ENCODE measurements at regions of chr21 and their contacts with region 1.

Region 1: DNA sequence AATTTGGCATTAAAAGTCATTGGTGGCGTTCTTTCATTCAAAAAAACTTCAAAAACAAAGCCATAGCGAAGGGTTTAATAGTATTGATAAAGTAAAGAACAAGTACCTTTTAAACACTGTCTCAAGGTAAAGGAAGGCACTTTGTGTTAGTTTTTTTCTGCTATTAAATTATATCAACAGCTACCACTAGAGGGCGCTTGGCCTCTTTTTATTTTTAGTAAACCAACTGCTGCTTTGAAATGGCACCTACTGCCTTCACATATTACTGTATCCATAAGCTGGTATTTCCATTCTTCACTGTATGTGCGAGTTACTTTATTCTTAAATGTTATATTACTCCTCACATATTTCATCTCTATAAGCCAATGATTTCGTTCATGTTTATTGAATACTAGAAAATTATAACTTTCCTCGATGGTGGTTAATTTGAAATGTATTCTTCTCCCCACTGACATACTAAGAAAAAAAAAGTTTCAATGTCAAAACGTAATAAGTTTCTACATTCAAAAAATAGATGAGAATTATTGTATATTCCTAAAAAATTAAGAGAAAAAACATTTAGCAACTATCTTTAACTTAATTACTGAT is 125.7 kb upstream of the CXADR start:
- H3K4me3 ChIP-seq: no peak overlapping the region
- H3K27ac ChIP-seq: no peak overlapping the region
- H3K4me1 ChIP-seq: no peaks in the 10 kb centered on the region
- CTCF ChIP-seq: no peak

Region 2: GRCh38 chr21:17512253-17513213 is 125.4 kb after region 1 on chr21 and contains the start of gene CXADR:
- CTCF ChIA-PET with region 1: interaction called, 28 read pairs
- POLR2A ChIA-PET with region 1: interaction called, 6 read pairs
- H3K4me3 ChIP-seq: peak within 1 kb of the TSS; percentile 91
- H3K27ac ChIP-seq: peak within 1 kb of the TSS; percentile 95
- H3K4me1 ChIP-seq: peaks cover 6% of the 10 kb centered on the region
- CTCF ChIP-seq: peak; percentile 46; the same call in 1 of the 2 replicates

Region 3: DNA sequence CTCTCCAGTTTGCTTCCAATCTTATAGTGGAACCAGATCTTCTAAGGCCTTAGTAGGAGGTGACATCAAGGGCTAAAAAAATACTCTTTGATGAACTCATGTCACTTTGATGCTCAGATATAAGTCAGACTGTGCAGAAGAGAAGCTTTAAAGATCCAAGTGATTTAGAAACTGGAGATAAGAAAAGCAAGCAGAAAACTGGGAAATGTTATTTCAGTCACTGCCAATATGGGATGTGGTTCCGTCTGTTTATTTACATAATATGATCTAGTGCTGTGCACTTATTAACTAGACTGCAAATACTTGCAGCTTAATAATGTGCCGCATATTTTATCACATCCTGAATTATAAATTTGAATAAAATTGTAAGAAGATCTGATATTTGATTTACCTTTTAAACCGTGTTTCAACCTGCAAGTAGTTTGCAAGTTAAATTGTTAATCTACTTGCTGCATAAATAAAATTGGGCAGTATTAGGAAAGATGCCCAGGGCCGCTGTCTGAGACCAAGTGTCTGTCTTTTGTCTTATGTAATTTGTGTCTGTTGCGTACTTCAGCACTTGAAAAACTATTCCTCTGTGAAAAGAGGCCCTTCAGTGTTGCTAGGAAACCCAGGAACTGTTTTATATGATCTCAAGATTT is 155.4 kb after region 1 on chr21:
- CTCF ChIA-PET with region 1: interaction called, 14 read pairs
- POLR2A ChIA-PET with region 1: no interaction called
- H3K4me3 ChIP-seq: no peak overlapping the region
- H3K27ac ChIP-seq: no peak overlapping the region; the same call in 1 of the 2 replicates
- H3K4me1 ChIP-seq: peaks cover 20% of the 10 kb centered on the region
- CTCF ChIP-seq: no peak

Region 4: GRCh38 chr21:17585875-17586450 is 198.8 kb after region 1 on chr21:
- CTCF ChIA-PET with region 1: interaction called, 118 read pairs
- POLR2A ChIA-PET with region 1: no interaction called
- H3K4me3 ChIP-seq: no peak overlapping the region
- H3K27ac ChIP-seq: no peak overlapping the region
- H3K4me1 ChIP-seq: no peaks in the 10 kb centered on the region
- CTCF ChIP-seq: no peak

Region 5: DNA sequence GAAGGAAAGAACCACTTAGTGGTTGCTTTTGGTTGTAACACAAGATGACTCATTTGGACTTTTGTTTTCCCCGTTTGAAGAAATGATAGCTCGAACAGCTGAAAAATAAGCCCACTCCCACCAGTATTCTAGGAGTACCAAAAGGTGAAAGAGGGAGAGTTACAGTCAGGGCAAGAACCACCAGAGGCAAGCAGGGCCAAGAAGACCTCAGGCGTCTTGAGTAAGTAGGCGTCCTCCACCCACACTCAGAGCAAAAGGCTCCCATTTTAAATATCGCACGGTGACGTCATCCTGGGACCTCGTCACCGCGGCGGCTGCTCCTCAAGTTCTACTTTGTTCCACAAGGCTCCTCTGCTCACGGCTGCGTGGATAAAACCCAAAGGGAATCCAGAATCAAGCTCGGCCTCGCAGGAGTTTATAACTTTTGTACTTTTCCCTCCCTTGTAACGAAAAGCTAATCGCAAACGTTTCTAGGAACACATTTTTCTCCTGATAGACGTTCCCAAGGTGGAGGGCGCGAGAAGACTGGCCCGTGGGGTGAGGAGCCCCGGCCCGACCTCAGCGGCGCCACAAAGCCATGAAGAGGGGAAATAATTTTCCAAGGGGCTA is 224.4 kb after region 1 on chr21:
- CTCF ChIA-PET with region 1: interaction called, 20 read pairs
- POLR2A ChIA-PET with region 1: no interaction called
- H3K4me3 ChIP-seq: peak overlapping the region; percentile 66
- H3K27ac ChIP-seq: peak overlapping the region; percentile 82
- H3K4me1 ChIP-seq: peaks cover 9% of the 10 kb centered on the region
- CTCF ChIP-seq: no peak

Measured in HEK293 (cell line).